Panc1 (cell line): ENCODE measurements at regions of chr2 and their contacts with region 1.

Region 1: DNA sequence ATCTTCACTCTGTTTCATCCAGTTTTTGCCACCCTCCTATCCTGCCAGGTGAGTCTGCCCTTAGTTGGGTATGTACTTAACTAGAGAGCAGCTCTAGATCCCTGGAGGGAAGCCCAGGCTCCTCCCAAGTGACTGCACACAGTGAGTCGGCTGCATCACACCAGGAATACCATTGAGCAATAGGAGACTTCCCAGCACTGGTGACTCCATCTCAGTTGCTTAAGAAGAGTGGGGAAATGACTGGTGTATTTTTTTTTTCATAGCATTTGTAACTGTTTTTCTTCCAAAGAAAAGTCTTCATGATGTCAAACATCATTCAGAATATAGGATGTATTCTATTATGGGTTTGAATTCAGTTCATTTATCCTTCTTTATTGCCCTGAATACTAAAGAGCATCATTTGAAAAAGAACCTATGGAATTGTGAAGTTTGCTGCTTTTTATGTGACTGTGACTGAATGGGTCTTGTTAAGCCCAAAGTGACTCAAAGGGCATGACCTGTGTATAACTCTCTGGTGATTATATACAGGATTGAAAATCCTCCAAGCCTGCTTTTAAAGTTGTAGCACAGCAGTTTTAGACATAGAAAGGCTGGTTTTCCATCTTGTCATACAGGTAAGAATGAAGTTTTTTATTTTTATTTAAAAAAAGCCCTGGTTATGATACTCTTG is 84.3 kb downstream of the MAP3K20 start:
- DNase-seq: peak; percentile 94
- ATAC-seq: peak; percentile 89
- H3K4me3 ChIP-seq: peak overlapping the region in 1 of 2 experiments; percentile 4; a peak in 1 of 4 replicates
- H3K27ac ChIP-seq: peak overlapping the region; percentile 91
- H3K4me1 ChIP-seq: peaks cover 61% of the 10 kb centered on the region
- H3K27me3 ChIP-seq: no peaks in the 10 kb centered on the region
- CTCF ChIP-seq: no peak

Region 2: GRCh38 chr2:173090276-173090877 is 69.6 kb before region 1 on chr2:
- CTCF ChIA-PET with region 1: interaction called, 6 read pairs
- POLR2A ChIA-PET with region 1: no interaction called
- in situ Hi-C with region 1: no loop called
- intact Hi-C with region 1: loop called (anchors 5 kb)
- DNase-seq: no peak
- ATAC-seq: peak; percentile 72
- H3K4me3 ChIP-seq: peak overlapping the region; percentile 11 to 32; a peak in 3 of 4 replicates
- H3K27ac ChIP-seq: peak overlapping the region; percentile 100
- H3K4me1 ChIP-seq: peaks cover 85% of the 10 kb centered on the region
- H3K27me3 ChIP-seq: no peaks in the 10 kb centered on the region
- CTCF ChIP-seq: no peak

Region 3: DNA sequence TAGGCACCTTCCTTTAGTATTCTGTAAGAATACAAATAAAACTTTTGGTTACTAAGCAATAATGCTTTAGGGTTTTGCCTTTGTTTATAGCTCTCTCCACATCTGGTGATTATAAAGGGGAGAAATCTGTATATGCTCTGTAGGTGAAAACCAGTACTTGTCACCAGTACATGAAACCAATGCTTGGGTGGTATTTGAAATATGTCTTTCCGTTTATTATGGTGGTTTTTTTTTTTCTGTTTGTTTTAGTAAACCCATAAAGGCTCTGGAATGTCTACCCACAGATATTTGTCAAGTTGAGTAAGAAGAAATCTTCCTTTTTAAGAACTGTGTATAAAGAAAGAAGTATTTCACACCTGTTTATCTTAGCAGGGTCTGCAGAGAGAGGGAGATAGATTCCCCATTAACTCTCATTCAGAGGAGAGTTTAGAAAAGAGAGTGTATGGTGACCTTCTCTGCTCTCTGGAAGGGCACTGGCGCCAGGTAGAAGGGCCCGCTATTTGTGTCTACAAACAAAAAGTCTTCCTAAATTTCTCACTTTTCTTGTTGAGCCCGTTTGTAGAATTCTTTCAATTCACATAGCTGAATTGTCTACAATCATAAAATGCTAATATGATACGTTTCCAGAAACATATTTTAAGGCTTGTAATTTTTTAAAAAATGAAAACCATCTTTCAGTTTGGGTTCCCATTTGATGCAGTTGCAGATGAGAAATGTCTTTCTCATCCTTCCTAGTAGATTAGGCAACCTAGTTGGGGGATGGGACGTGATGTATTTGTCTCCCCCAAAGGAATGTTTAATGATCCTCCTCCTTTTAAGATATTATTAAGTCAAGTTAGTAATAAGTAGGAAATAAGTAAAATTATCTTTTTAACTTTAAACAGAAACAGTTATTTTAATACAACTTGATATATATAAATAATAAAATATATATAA is 50.4 kb before region 1 on chr2:
- CTCF ChIA-PET with region 1: no interaction called
- POLR2A ChIA-PET with region 1: no interaction called
- in situ Hi-C with region 1: no loop called
- intact Hi-C with region 1: loop called (anchors 5 kb)
- DNase-seq: peak; percentile 72
- ATAC-seq: peak; percentile 90
- H3K4me3 ChIP-seq: no peak overlapping the region
- H3K27ac ChIP-seq: peak overlapping the region; percentile 99
- H3K4me1 ChIP-seq: peaks cover 39% of the 10 kb centered on the region
- H3K27me3 ChIP-seq: no peaks in the 10 kb centered on the region
- CTCF ChIP-seq: no peak

Region 4: GRCh38 chr2:173347305-173348168 is 187.6 kb after region 1 on chr2:
- CTCF ChIA-PET with region 1: no interaction called
- POLR2A ChIA-PET with region 1: no interaction called
- in situ Hi-C with region 1: no loop called
- intact Hi-C with region 1: no loop called
- DNase-seq: no peak
- ATAC-seq: no peak
- H3K4me3 ChIP-seq: no peak overlapping the region
- H3K27ac ChIP-seq: no peak overlapping the region
- H3K4me1 ChIP-seq: no peaks in the 10 kb centered on the region
- H3K27me3 ChIP-seq: no peaks in the 10 kb centered on the region
- CTCF ChIP-seq: no peak